Activated naive CD4-positive, alpha-beta T cell treated with anti-CD3 and anti-CD28 coated beads for 36 hours (primary cell): ENCODE measurements at regions of chr14 and their contacts with region 1.

Region 1: GRCh38 chr14:50860478-50861086 is 11.3 kb upstream of the ABHD12B start:
- DNase-seq: peak; percentile 96
- H3K4me3 Mint-ChIP-seq: peak overlapping the region; percentile 80
- H3K27ac Mint-ChIP-seq: peak overlapping the region; percentile 36
- H3K4me1 Mint-ChIP-seq: peaks cover 10% of the 10 kb centered on the region
- H3K27me3 Mint-ChIP-seq: no peaks in the 10 kb centered on the region

Region 2: DNA sequence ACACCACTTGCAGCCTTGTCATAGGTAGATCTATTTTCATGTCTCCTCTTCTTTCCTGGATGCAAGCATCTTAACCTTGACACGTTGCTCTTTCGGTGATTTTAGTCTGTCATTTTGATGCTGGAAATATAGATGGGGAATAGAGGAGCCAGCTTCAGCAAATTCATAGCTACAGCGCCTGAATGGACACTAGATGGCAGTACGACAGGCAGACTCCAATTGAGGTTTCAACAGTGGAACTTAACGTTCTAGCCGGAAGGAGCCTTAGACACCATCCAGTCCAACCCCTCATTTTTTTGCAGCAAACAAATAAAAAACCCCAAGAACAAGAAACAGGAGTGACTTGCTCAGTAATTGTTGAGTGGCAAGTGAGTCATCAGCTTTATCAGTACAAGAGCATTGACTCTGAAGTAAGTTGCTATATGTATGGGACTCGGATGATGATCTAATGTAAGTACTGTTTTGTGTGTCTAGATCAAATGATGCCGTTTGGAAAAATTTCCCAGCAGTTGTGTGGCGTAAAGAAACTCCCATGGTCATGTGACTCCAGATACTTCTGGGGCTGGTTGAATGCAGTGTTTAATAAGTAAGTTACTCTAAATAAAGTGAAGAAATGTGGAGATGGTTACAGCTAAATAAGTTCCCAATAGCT is 539.4 kb before region 1 on chr14:
- CTCF ChIA-PET with region 1: no interaction called
- intact Hi-C with region 1: loop called (anchors 1 kb)
- DNase-seq: peak; percentile 80
- H3K4me3 Mint-ChIP-seq: no peak overlapping the region
- H3K27ac Mint-ChIP-seq: no peak overlapping the region
- H3K4me1 Mint-ChIP-seq: peaks cover 25% of the 10 kb centered on the region
- H3K27me3 Mint-ChIP-seq: no peaks in the 10 kb centered on the region

Region 3: DNA sequence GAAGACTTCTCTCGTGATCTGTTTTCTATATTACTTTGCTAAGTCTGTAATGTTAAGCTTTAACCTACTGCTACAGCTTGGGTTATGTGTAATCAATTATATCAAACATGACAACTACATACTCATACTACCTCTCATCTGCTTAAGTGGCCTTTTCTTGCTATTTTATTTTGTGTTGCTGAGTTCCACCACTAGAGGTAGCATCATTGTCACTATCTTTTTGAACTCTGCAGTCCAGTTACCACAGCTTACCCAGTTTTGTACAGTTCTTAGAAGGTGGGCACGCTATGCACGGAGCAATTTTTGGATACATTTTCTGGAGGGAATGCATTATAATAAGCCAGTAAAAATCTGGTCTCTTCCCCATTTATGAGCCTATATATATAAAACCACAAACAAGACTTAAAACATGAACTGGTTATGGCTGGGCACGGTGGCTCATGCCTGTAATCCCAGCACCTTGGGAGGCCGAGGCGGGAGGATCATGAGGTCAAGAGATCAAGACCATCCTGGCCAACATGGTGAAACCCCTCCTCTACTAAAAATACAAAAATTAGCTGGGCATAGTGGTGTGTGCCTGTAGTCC is 240.9 kb before region 1 on chr14:
- CTCF ChIA-PET with region 1: interaction called, 8 read pairs
- intact Hi-C with region 1: loop called (anchors 1 kb)
- DNase-seq: no peak
- H3K4me3 Mint-ChIP-seq: no peak overlapping the region
- H3K27ac Mint-ChIP-seq: no peak overlapping the region
- H3K4me1 Mint-ChIP-seq: no peaks in the 10 kb centered on the region
- H3K27me3 Mint-ChIP-seq: no peaks in the 10 kb centered on the region

Region 4: DNA sequence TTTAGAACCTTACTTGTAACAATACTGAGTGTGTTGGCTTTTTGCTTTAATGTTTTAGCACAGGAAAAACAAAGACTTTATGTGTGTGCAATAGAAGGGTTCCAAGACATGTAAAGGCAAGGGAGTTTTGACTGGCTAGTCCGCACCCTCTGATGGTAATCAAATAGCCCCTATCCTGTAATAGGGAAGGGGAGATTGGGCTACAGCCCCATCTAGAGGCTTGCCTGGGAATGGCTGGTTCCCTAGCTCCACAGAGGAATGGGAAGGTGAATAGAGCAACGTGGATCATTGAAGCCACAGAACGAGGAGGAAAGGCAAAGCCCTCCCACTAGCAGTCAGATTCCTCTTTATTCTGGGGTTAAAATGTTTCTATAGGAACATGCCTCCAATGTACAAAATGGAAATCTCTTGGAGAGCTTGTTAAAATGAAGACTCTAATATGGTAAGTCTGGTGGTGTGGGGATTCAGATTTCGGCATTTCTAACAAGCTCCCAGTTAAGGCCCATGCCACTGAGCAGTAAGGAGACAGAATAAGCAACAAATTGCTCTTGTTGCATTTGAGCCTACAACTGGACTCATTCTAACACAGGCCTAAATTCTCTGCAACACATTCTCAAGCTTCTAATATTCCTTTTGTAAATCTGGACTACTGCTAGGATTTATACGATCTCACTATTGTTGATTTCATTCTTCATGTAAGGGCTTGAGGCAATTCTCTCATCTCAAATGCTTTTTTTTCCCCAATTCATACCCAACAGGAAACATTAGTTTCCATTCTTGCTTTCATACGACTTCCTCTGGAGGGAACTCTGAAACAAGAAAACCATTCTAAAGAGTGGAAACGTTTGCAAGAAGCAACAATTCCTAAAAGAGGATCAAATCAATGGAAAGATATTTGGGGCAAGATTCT is 86.7 kb before region 1 on chr14:
- CTCF ChIA-PET with region 1: interaction called, 143 read pairs
- intact Hi-C with region 1: loop called (anchors 1 kb)
- DNase-seq: peak; percentile 61
- H3K4me3 Mint-ChIP-seq: no peak overlapping the region
- H3K27ac Mint-ChIP-seq: no peak overlapping the region
- H3K4me1 Mint-ChIP-seq: peaks cover 21% of the 10 kb centered on the region
- H3K27me3 Mint-ChIP-seq: no peaks in the 10 kb centered on the region

Region 5: GRCh38 chr14:50801706-50802105 is 58.9 kb before region 1 on chr14:
- CTCF ChIA-PET with region 1: interaction called, 10 read pairs
- intact Hi-C with region 1: no loop called
- DNase-seq: no peak
- H3K4me3 Mint-ChIP-seq: no peak overlapping the region
- H3K27ac Mint-ChIP-seq: no peak overlapping the region
- H3K4me1 Mint-ChIP-seq: peaks cover 35% of the 10 kb centered on the region
- H3K27me3 Mint-ChIP-seq: no peaks in the 10 kb centered on the region

Region 6: DNA sequence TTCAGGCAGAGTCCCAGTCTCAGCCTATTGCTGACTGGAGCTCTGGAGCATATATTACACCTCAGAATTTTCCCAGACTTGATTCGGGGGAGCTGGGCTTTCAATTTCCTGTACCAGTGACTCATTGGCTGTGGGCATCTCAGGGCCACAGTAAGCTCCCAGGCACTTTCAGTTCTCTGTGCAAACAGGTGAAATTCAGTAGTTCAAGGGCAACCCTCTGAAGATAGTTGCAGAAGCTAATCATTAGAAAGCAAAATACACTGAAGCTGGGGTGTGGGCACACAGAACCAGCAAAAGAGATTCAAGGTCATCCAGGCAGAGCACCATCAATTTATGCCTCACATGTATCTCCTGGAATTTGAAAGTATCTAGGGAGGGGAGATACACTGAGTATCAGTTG is 21.5 kb before region 1 on chr14:
- CTCF ChIA-PET with region 1: interaction called, 13 read pairs
- intact Hi-C with region 1: no loop called
- DNase-seq: peak; percentile 35
- H3K4me3 Mint-ChIP-seq: no peak overlapping the region
- H3K27ac Mint-ChIP-seq: no peak overlapping the region
- H3K4me1 Mint-ChIP-seq: peaks cover 31% of the 10 kb centered on the region
- H3K27me3 Mint-ChIP-seq: no peaks in the 10 kb centered on the region

Region 7: DNA sequence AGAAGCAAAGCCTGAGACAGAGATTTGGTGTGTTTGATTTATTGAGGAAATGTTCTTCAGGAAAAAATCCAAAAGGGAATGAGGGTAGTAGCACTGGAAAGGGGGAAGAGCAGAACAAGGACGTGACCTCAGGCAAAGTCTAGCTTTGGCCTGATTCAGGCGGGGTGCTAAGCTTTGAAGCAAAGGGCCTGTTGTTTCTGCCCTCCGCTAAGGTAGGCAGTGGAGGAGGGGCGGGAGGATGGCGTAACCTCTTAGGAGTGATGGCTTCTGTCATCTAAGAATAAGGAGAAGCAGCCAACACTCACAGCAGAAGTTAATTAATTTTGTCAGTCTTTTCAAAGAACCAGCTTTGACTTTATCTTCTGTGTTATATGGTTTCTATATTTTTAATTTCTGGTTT is 31.7 kb after region 1 on chr14:
- CTCF ChIA-PET with region 1: no interaction called
- intact Hi-C with region 1: no loop called
- DNase-seq: no peak
- H3K4me3 Mint-ChIP-seq: no peak overlapping the region
- H3K27ac Mint-ChIP-seq: no peak overlapping the region
- H3K4me1 Mint-ChIP-seq: no peaks in the 10 kb centered on the region
- H3K27me3 Mint-ChIP-seq: no peaks in the 10 kb centered on the region

Region 8: GRCh38 chr14:51239813-51240803 is 379.5 kb after region 1 on chr14 and contains the start of gene TMX1:
- CTCF ChIA-PET with region 1: no interaction called
- intact Hi-C with region 1: no loop called
- DNase-seq: peak; percentile 95
- H3K4me3 Mint-ChIP-seq: no peak within 1 kb of the TSS
- H3K27ac Mint-ChIP-seq: no peak within 1 kb of the TSS
- H3K4me1 Mint-ChIP-seq: peaks cover 28% of the 10 kb centered on the region
- H3K27me3 Mint-ChIP-seq: no peaks in the 10 kb centered on the region
- total RNA-seq, gene TMX1: 59.4 to 59.6 TPM